Gastrocnemius medialis (tissue), 4 donors: ENCODE measurements at regions of chr9 and their contacts with region 1.

Region 1: GRCh38 chr9:68560071-68560844 is 19.6 kb upstream of the TMEM252 start:
- DNase-seq: peak in 1 of 2 donors; percentile 57
- ATAC-seq: peak; percentile 27 to 82
- H3K4me3 ChIP-seq: no peak overlapping the region
- H3K27ac ChIP-seq: no peak overlapping the region
- H3K4me1 ChIP-seq: peaks cover 0 to 8% of the 10 kb centered on the region in 2 donors
- H3K27me3 ChIP-seq: no peaks in the 10 kb centered on the region
- CTCF ChIP-seq: peak; percentile 21 to 69 (median 53)
- POLR2A ChIP-seq: no peak

Region 2: DNA sequence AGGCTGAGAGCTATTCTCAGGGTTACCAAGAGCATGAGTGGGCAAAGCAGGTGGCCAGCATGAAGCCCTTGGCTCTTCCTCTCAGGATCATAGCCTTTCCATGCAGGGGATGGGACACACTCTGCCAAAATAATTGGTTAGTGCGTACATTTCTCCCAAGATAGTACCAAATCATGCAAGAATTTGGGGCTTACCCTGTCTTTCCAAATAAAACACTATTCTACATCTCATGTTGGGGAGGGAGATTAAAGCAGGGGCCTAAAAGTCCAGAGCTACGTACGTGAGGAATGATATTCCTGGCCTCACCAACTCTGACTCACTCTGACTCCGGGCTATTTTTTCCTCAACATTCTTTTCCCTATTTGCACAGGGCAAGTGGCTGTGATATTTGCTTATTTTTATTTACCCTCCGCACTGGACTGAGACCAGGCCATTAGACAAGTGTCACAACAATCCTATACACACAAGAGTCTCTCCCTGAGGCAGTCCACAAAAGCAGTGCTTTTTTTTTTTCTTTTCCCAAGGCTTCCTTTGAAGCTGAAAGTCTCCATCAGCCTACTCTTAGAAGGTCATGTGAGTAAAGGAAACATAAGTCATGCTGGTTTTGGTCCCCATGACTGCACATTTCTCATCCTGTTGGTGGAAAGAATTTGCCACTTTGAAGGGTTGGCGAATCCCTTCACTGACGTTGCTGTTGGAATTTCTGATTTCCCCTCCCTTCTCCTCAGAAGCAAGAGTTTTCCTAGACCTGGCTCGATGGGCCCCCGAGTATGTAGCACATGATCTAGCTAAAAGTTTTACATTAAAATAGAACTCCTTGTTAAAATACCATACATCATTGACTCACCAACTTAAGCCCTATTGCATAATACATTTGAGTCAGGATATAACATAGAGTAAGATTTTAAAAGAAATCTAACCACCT is 59.5 kb before region 1 on chr9:
- in situ Hi-C with region 1: loop called in 2 of 4 experiments (anchors 10 kb)
- intact Hi-C with region 1: loop called (anchors 5 kb)
- DNase-seq: no peak
- ATAC-seq: peak; percentile 86 to 91
- H3K4me3 ChIP-seq: no peak overlapping the region
- H3K27ac ChIP-seq: peak overlapping the region; percentile 79 to 82 (median 80)
- H3K4me1 ChIP-seq: peaks cover 29 to 34% of the 10 kb centered on the region in 2 donors
- H3K27me3 ChIP-seq: no peaks in the 10 kb centered on the region
- CTCF ChIP-seq: no peak
- POLR2A ChIP-seq: no peak

Region 3: DNA sequence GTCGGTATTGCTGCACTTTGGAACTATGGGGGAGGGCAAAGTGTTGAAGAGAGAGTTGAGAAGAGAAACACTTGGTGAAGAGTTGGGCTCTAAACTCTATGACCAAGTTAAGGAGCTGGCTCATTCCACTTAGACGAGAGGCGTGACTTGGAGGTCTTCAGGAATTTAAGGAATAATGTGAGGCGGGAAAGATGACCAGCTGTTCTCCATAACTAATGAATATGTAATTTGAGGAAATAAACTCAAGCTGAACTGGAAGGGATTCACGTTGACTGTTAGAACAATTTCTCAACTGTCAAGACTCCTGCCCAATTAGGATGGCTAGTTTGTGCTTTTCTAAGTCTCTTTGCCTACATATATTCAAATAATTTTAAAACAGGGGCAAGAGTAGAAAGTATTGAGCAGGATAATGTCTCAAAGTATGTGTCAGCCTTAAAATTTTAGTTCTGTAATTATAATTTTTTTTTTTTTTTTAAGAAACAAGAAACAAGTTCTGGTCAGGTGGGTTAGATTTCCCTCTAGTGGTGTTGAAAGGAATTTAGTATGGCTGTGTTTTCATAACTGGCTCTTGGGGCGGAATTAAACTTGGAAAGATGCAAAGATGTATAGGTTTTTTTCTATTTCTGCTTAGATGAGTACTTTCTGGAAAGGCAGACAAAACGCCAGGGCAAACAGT is 53.0 kb before region 1 on chr9:
- in situ Hi-C with region 1: loop called in 2 of 4 experiments (anchors 10 kb)
- intact Hi-C with region 1: loop called (anchors 5 kb)
- DNase-seq: no peak
- ATAC-seq: peak; percentile 35 to 44
- H3K4me3 ChIP-seq: no peak overlapping the region
- H3K27ac ChIP-seq: peak overlapping the region; percentile 35 to 47 (median 36)
- H3K4me1 ChIP-seq: peaks cover 8% of the 10 kb centered on the region in 2 donors
- H3K27me3 ChIP-seq: no peaks in the 10 kb centered on the region
- CTCF ChIP-seq: peak; percentile 54 to 73 (median 65)
- POLR2A ChIP-seq: no peak

Region 4: DNA sequence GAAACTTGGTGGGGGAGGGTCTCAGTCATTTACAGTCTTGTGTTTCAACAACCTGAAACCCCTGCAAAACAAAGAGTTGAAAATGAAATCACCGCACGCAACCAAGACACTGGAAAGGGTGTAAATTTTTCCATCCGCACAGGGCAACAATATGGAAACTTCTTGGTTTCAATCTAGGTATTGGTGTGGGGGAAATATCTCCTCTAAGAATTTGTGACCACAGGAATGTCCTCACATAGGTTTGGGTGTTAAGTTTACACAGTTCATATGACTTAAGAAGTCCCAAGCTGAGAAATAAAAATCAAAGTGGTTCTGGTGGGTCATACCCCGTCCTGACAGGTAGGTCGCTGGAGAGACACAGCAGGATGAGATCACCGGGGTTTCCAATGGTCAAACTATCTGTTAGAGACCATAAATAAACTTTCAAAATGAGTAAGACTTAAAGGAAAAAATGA is 92.9 kb after region 1 on chr9:
- in situ Hi-C with region 1: loop called in 1 of 4 experiments (anchors 25 kb)
- intact Hi-C with region 1: no loop called
- DNase-seq: no peak
- ATAC-seq: no peak
- H3K4me3 ChIP-seq: no peak overlapping the region
- H3K27ac ChIP-seq: no peak overlapping the region
- H3K4me1 ChIP-seq: no peaks in the 10 kb centered on the region
- H3K27me3 ChIP-seq: no peaks in the 10 kb centered on the region
- CTCF ChIP-seq: no peak
- POLR2A ChIP-seq: no peak